ENCODE measurements at regions of chr16 and their contacts with region 1.

Region 1: DNA sequence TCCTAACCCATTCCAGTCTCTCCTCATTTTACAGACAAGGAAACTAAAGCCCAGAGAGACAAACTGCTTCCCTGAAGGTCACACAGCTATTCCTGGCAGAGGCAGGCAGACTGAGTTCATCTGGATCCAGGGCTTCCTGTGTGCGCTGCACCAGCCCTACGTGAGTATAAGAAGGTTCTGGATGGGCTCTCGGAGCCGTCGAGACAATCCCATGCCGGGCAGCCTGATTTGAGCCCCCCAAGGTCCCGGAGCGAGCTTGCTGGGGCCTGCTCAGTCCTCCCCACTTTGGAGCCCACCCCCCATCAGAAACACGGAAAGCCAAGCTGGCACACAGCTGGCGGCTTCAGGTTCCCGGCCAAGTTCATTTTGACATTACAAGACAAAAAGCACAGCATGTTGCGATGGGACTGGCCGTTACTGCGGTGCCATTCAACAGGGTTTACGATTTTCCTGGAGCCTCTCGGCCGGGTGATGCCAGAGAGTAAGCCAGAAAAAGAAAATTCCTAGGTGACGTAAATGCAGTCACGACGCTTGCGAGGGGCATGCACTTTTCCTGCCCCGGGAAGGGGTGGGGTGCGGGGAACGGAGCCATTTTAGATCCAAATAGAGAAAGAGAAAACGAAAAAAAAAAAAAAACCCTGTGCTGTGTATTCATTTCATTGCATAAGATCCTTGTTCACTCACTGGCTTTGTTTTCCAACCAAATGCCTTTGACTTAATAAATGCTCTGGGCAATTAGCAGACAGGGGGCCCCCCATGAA is 167.1 kb upstream of the FOXF1 start:
- DNase-seq: peak; percentile 84 to 88
- ATAC-seq: peak; percentile 80
- H3K4me3 ChIP-seq: no peak overlapping the region
- H3K27ac ChIP-seq: peak overlapping the region in 1 of 2 donors; percentile 73
- H3K4me1 ChIP-seq: no peaks in the 10 kb centered on the region
- H3K27me3 ChIP-seq: no peaks in the 10 kb centered on the region

Region 2: GRCh38 chr16:86212706-86213436 is 130.3 kb before region 1 on chr16:
- intact Hi-C with region 1: no loop called
- DNase-seq: no peak
- ATAC-seq: no peak
- H3K4me3 ChIP-seq: no peak overlapping the region
- H3K27ac ChIP-seq: no peak overlapping the region
- H3K4me1 ChIP-seq: no peaks in the 10 kb centered on the region
- H3K27me3 ChIP-seq: no peaks in the 10 kb centered on the region

Region 3: DNA sequence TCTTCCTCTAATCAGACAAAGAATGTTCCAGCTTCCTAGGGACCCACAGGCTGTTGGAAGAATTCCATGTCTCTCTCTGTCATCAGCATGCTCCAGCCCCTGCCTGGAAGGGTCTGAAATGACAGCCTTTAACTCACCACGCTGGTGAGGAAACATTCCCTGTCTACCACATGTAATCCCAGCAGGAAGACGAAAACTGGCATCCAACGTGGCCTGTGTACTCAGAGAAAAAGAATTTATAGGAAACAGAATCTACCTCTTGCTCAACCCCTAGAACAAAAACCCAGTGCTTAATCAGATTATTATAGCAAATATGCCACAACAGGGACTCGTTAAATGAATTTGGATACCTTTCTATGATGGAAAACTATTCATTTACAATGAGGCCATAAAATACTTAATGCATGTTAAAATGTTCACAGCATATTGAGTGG is 19.9 kb after region 1 on chr16:
- intact Hi-C with region 1: loop called in 1 of 2 experiments (anchors 2 kb)
- DNase-seq: peak in 1 of 2 donors; percentile 42
- ATAC-seq: no peak
- H3K4me3 ChIP-seq: no peak overlapping the region
- H3K27ac ChIP-seq: no peak overlapping the region
- H3K4me1 ChIP-seq: no peaks in the 10 kb centered on the region
- H3K27me3 ChIP-seq: no peaks in the 10 kb centered on the region

Region 4: GRCh38 chr16:86508947-86509758 is 165.9 kb after region 1 on chr16:
- intact Hi-C with region 1: loop called in 1 of 2 experiments (anchors 2 kb)
- DNase-seq: peak; percentile 66 to 87
- ATAC-seq: peak; percentile 44
- H3K4me3 ChIP-seq: peak overlapping the region; percentile 53 to 58
- H3K27ac ChIP-seq: no peak overlapping the region
- H3K4me1 ChIP-seq: no peaks in the 10 kb centered on the region
- H3K27me3 ChIP-seq: no peaks in the 10 kb centered on the region

Region 5: DNA sequence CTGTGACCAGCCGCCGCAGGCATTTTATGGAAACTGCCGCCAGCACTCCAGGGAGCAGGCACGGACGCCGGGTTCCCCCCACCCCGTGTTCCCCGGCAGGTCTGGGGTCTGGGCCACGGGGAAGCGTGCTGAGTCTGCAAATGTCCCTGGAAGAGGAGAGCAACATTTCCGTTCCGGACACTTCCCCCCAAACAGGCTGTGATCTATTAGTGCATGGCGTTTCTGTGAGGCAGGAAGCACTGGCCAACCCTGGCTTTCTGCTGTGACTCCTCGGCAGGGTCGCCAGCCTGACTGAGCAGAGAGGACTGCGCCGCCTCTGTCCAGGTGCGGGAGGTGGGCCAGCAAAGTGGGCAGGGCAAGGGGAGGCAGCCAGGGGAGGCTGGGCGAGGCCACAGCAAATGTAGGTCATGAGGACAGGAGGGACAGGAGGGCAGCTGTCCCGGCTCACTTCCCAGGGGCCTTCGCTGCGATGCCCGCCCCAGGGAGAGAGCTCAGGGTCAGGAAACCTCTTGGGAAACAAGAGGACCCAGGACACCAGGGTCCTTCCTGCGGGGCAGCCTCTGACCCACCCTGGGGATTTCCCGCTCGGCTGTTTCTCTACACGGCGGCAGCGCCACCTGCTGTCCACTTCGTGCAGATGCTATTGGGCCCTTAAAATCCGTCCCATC is 176.6 kb after region 1 on chr16:
- intact Hi-C with region 1: loop called (anchors 2 kb)
- DNase-seq: peak in 1 of 2 donors; percentile 90
- ATAC-seq: no peak
- H3K4me3 ChIP-seq: no peak overlapping the region
- H3K27ac ChIP-seq: no peak overlapping the region
- H3K4me1 ChIP-seq: no peaks in the 10 kb centered on the region
- H3K27me3 ChIP-seq: no peaks in the 10 kb centered on the region